ENCODE measurements at regions of chr9 and their contacts with region 1.

Region 1: GRCh38 chr9:108761655-108762347 is 94.0 kb downstream of the ACTL7B start:
- DNase-seq: peak; percentile 49
- H3K4me3 Mint-ChIP-seq: no peak overlapping the region
- H3K27ac Mint-ChIP-seq: no peak overlapping the region
- H3K4me1 Mint-ChIP-seq: no peaks in the 10 kb centered on the region
- H3K27me3 Mint-ChIP-seq: peaks cover 30% of the 10 kb centered on the region
- CTCF ChIP-seq: peak; percentile 70

Region 2: GRCh38 chr9:107421947-107422793 is 1339.6 kb before region 1 on chr9:
- CTCF ChIA-PET with region 1: no interaction called
- intact Hi-C with region 1: loop called (anchors 5 kb)
- DNase-seq: peak; percentile 73
- H3K4me3 Mint-ChIP-seq: no peak overlapping the region
- H3K27ac Mint-ChIP-seq: no peak overlapping the region
- H3K4me1 Mint-ChIP-seq: no peaks in the 10 kb centered on the region
- H3K27me3 Mint-ChIP-seq: peaks cover 13% of the 10 kb centered on the region
- CTCF ChIP-seq: peak; percentile 28

Region 3: DNA sequence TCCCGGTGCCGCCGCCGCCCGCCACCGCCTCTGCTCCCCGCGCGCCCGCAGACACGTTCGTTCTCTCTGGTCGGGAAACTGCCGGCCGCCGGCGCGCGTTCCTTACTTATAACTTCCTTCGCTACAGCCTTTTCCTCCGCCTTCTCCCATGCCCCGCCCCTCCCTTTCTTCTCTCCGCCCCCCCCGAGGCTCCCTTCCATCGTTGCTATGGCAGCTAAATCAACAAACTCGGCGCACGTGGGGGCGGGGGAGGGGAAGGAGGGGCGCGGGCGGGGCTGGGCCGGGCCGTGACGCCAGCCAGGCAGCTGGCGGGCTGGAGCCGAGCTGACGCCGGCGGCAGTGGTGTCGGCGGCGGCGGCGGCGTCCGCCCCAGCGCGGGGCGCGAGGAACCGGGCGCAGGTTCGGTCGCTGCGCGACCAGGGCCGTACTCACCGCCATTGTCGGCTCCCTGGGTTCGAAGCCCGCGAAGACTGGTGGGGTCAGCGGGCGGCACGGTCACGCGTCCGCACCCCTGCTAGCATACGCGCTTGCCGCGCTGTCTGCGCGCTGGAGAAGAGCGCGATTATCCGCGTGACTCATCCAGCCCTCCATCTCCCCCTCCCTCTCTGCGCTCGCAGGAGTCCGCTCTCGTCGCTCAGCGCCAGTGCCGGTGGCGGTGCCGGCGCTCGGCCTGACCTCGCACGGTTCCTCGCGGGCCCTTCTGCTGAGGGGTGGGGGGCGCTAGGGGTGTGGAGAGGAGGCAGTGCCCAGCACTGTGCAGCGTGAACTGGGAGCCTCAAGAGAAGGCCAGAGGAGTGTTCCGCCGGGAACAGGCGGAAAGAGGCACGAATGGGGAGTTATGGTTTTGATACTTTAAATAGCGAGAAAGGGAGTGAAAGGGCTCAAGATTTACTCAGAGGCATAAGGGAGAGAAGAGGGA is 1271.9 kb before region 1 on chr9 and contains the start of gene KLF4:
- CTCF ChIA-PET with region 1: no interaction called
- intact Hi-C with region 1: loop called (anchors 10 kb)
- DNase-seq: peak; percentile 79
- H3K4me3 Mint-ChIP-seq: peak within 1 kb of the TSS; percentile 84
- H3K27ac Mint-ChIP-seq: peak within 1 kb of the TSS; percentile 94
- H3K4me1 Mint-ChIP-seq: peaks cover 44% of the 10 kb centered on the region
- H3K27me3 Mint-ChIP-seq: no peaks in the 10 kb centered on the region
- CTCF ChIP-seq: no peak
- total RNA-seq, gene KLF4: 19.9 and 23.0 TPM in 2 replicates

Region 4: GRCh38 chr9:108282872-108283271 is 478.9 kb before region 1 on chr9:
- CTCF ChIA-PET with region 1: no interaction called
- intact Hi-C with region 1: loop called (anchors 10 kb)
- DNase-seq: no peak
- H3K4me3 Mint-ChIP-seq: no peak overlapping the region
- H3K27ac Mint-ChIP-seq: no peak overlapping the region
- H3K4me1 Mint-ChIP-seq: peaks cover 11% of the 10 kb centered on the region
- H3K27me3 Mint-ChIP-seq: no peaks in the 10 kb centered on the region
- CTCF ChIP-seq: no peak

Region 5: DNA sequence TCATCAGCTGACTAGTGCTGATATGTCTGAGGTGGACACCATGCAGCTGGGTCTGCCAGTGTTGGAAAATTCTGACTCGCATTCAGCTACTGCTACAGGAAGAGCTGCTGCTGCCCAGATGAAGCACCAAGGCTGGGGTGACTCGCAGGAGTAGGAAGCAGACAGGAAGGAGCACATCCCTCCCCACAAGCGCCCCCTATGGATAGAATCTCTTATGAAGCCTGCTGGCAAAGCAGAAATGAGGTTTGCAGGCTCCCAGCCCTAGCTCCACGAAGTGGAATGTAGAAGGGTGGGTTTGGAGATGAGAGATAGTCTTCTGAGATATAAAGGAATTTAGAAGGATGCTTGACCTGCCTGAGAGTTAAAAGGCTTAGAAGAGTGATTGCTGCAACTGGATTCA is 349.0 kb before region 1 on chr9:
- CTCF ChIA-PET with region 1: no interaction called
- intact Hi-C with region 1: loop called (anchors 1 kb)
- DNase-seq: peak; percentile 5
- H3K4me3 Mint-ChIP-seq: no peak overlapping the region
- H3K27ac Mint-ChIP-seq: no peak overlapping the region
- H3K4me1 Mint-ChIP-seq: no peaks in the 10 kb centered on the region
- H3K27me3 Mint-ChIP-seq: no peaks in the 10 kb centered on the region
- CTCF ChIP-seq: no peak

Region 6: GRCh38 chr9:108565651-108566378 is 196.0 kb before region 1 on chr9:
- CTCF ChIA-PET with region 1: interaction called, 4 read pairs
- intact Hi-C with region 1: loop called (anchors 5 kb)
- DNase-seq: peak; percentile 47
- H3K4me3 Mint-ChIP-seq: no peak overlapping the region
- H3K27ac Mint-ChIP-seq: no peak overlapping the region
- H3K4me1 Mint-ChIP-seq: peaks cover 10% of the 10 kb centered on the region
- H3K27me3 Mint-ChIP-seq: no peaks in the 10 kb centered on the region
- CTCF ChIP-seq: no peak

Region 7: DNA sequence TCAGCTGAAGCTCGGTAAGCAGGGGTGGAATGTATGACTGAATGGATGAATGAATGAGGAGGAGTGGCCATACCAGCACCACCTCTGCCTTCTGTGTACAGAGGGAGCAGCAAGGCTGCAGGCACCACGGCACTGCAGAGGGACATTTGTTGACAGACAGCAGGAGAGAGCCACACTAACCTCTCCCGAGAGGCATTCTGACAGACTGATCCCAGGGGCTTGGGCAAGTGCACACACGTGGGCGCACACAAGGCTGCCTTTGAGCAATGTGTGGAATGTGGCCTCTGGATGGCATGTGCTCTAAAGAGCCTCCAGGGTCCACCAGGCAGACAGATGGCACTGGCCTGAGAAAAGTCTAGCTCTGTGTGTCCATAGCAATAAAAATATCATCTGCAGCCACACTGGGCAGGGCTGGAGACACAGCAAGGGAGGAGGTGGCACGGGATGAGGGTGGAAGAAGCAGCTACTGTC is 17.9 kb before region 1 on chr9:
- CTCF ChIA-PET with region 1: no interaction called
- intact Hi-C with region 1: no loop called
- DNase-seq: peak; percentile 1
- H3K4me3 Mint-ChIP-seq: no peak overlapping the region
- H3K27ac Mint-ChIP-seq: no peak overlapping the region
- H3K4me1 Mint-ChIP-seq: peaks cover 11% of the 10 kb centered on the region
- H3K27me3 Mint-ChIP-seq: no peaks in the 10 kb centered on the region
- CTCF ChIP-seq: no peak

Measured in Calu3 (cell line).